ENCODE measurements at regions of chr3 and their contacts with region 1.

Region 1: DNA sequence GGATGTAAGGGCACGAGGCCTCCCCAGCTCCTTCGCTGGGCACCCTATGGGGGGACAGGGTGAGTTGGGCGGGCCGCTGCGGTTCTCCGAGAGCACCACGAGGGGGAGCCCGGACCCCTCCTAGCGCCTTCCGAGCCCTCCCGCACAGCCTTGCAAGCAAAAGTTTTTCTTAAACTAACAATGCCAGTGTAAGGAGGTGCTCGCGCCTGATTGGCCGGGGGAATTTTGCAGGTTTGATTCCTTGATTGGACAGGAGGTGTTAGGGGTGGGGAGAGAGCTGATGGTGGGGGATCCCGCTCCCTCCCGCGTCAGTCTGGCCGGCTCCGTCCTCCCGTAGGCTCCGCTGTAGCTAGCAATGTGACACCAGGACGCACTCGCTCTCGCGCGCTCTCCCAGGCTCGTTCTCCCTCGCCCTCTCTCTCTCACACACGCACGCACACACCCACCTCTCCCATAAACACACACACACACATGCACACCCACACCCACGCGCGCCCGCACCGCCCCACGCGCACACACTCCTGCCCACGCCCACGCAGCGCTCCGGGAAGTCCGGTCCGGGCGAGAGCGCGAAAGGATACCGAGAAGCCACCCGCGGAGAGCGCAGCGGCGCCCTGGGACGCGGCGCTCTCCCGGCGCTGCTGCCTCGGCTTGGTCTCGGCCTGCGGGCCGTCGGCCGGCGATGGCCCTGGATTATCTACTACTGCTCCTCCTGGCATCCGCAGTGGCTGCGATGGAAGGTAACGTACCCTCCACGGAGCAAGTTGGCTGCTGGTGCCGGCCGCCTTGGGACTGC is at the start of gene EPHB1:
- DNase-seq: peak; percentile 93
- ATAC-seq: peak; percentile 91
- H3K4me3 Mint-ChIP-seq: peak within 1 kb of the TSS; percentile 96
- H3K27ac Mint-ChIP-seq: peak within 1 kb of the TSS; percentile 96
- H3K4me1 Mint-ChIP-seq: peaks cover 13% of the 10 kb centered on the region
- H3K27me3 Mint-ChIP-seq: peaks cover 70% of the 10 kb centered on the region
- CTCF ChIP-seq: peak; percentile 84
- total RNA-seq, gene EPHB1: 7.0 to 9.9 TPM (median 8.2 TPM) in 3 replicates

Region 2: GRCh38 chr3:134809427-134810051 is 14.4 kb after region 1 on chr3:
- CTCF ChIA-PET with region 1: interaction called, 32 read pairs
- POLR2A ChIA-PET with region 1: no interaction called
- DNase-seq: no peak
- ATAC-seq: peak; percentile 65
- H3K4me3 Mint-ChIP-seq: peak overlapping the region; percentile 37
- H3K27ac Mint-ChIP-seq: peak overlapping the region; percentile 96
- H3K4me1 Mint-ChIP-seq: peaks cover 55% of the 10 kb centered on the region
- H3K27me3 Mint-ChIP-seq: no peaks in the 10 kb centered on the region; the same call in 1 of the 2 replicates
- CTCF ChIP-seq: no peak

Region 3: GRCh38 chr3:134978658-134979057 is 183.5 kb after region 1 on chr3:
- CTCF ChIA-PET with region 1: interaction called, 10 read pairs
- POLR2A ChIA-PET with region 1: no interaction called
- DNase-seq: no peak
- ATAC-seq: peak; percentile 46
- H3K4me3 Mint-ChIP-seq: no peak overlapping the region
- H3K27ac Mint-ChIP-seq: no peak overlapping the region
- H3K4me1 Mint-ChIP-seq: no peaks in the 10 kb centered on the region
- H3K27me3 Mint-ChIP-seq: peaks cover 3% of the 10 kb centered on the region
- CTCF ChIP-seq: no peak

Region 4: DNA sequence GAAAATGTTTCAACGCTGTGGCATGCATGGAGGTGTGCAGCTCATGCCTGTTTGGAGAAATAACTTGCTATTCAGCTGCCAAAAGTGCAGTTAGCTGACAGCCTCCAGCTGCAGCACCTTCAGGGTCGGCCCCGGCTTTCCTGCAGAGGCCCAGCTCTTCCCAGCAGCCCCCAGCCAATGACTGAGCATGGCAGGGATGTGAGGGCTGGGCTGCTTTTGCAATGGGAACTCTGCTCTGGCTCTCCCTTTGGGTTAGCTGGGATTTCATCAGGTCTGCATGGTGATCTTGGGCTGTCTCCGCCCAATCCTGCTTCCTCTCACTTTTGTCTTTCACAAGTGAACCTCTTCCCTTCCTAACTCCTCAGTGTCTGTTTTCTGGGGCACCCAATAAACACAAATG is 396.6 kb after region 1 on chr3:
- CTCF ChIA-PET with region 1: interaction called, 11 read pairs
- POLR2A ChIA-PET with region 1: no interaction called
- DNase-seq: peak; percentile 18
- ATAC-seq: peak; percentile 96
- H3K4me3 Mint-ChIP-seq: no peak overlapping the region
- H3K27ac Mint-ChIP-seq: peak overlapping the region; percentile 72
- H3K4me1 Mint-ChIP-seq: peaks cover 19% of the 10 kb centered on the region
- H3K27me3 Mint-ChIP-seq: no peaks in the 10 kb centered on the region
- CTCF ChIP-seq: no peak

Region 5: GRCh38 chr3:135246027-135246426 is 450.9 kb after region 1 on chr3:
- CTCF ChIA-PET with region 1: interaction called, 65 read pairs
- POLR2A ChIA-PET with region 1: no interaction called
- DNase-seq: peak; percentile 24
- ATAC-seq: peak; percentile 76
- H3K4me3 Mint-ChIP-seq: no peak overlapping the region
- H3K27ac Mint-ChIP-seq: no peak overlapping the region
- H3K4me1 Mint-ChIP-seq: peaks cover 7% of the 10 kb centered on the region
- H3K27me3 Mint-ChIP-seq: no peaks in the 10 kb centered on the region
- CTCF ChIP-seq: no peak

Region 6: GRCh38 chr3:135503760-135504686 is 708.9 kb after region 1 on chr3:
- CTCF ChIA-PET with region 1: interaction called, 41 read pairs
- POLR2A ChIA-PET with region 1: interaction called, 4 read pairs
- DNase-seq: peak; percentile 92
- ATAC-seq: peak; percentile 98
- H3K4me3 Mint-ChIP-seq: peak overlapping the region; percentile 57
- H3K27ac Mint-ChIP-seq: peak overlapping the region; percentile 63; the same call in 1 of the 2 replicates
- H3K4me1 Mint-ChIP-seq: peaks cover 17% of the 10 kb centered on the region
- H3K27me3 Mint-ChIP-seq: peaks cover 4% of the 10 kb centered on the region; the same call in 1 of the 2 replicates
- CTCF ChIP-seq: peak; percentile 42